ENCODE measurements at regions of chr11 and their contacts with region 1.

Region 1: DNA sequence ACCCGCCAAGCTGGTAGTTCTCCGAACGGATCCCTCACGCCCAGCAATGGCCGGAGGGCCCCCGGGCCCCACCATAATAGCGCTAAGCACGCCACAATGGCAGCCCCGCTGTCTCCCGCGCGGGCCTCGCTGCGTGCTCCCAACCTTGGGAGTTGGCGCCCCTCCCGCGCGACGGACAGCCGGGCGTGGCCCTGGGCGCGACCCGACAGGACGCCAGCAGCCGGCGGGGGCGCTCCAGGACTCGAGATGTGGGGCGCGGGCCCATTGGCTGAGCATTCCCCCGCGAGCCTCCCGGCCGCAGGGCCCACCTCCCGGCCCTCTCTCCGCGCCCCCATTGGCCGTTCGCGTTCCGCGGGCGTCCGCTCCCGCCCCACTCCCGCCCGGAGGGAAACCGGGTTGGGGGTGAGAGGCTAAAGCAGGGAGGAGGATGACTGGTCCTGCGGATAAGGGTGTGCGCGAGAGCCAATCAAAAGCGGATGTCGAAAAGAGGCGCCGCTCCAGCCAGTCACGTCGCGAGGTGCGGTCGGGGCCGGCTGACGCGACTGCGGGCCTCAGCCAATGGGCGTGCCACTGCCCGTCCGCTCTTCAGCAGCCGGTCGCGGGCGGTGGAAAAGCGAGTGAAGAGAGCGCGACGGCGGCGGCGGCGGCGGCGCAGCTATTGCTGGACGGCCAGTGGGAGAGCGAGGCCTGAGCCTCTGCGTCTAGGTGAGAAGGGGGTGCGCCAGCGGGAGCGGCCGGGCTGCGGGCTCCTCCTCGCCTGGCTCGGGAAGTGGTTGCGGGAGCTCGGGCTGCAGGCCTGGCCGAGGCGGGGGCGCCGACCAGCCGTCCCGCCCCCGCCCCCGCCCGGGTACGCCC is at the start of gene FAR1:
- DNase-seq: peak; percentile 98
- ATAC-seq: peak; percentile 87
- H3K4me3 ChIP-seq: peak within 1 kb of the TSS; percentile 69 to 92 (median 80)
- H3K4me3 Mint-ChIP-seq: peak within 1 kb of the TSS; percentile 96
- H3K27ac ChIP-seq: peak within 1 kb of the TSS; percentile 50 to 74
- H3K27ac Mint-ChIP-seq: peak within 1 kb of the TSS; percentile 94
- H3K4me1 ChIP-seq: peaks cover 16 to 24% of the 10 kb centered on the region in 2 donors
- H3K4me1 Mint-ChIP-seq: peaks cover 43% of the 10 kb centered on the region
- H3K27me3 ChIP-seq: peaks cover 0 to 4% (median 1%) of the 10 kb centered on the region in 4 experiments
- H3K27me3 Mint-ChIP-seq: peaks cover 8% of the 10 kb centered on the region
- CTCF ChIP-seq: peak; percentile 78
- total RNA-seq, gene FAR1: 44.7 and 44.8 TPM in 2 replicates

Region 2: DNA sequence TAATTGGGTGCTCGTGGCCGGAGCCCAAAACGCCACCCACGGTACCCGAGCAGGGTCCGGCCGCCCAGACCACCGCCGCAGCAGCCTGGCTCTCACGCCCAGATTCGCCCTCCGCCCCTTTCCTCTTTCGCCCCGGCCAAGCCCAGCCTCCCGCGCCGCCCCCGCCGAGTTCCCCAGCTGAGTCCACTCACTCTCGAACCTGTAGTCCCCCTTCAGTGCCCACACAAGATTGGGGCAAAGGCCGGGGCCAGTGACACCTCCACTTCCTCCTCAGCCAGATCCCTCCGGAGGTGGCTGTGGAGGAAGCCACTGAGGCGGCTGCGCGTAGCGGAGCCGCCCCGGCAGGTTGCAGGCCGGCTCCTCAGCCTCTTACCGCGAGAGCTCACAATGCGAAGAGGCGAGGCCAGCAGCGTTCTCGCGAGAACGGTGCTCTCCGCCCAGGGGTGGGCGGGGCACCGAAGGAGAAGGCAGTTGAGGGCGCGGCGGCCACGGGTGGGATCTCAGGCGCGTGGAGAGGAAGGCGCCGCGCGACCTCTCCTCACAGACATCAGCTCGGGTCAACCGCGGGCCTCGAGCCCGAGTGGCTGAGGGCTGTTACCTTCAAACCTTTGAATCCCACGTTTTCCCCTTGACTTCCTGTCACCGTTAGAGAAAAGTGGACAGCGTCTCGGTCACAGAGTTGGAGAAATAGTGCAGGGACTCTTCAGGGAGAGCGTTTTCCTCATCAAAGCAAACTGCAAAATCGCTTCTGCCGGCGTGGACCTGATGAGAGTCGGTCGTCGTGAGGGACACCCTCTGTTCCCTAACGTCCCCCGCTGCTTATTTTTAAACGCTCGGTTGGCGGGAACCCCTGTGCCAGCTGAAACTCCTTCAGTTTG is 205.2 kb before region 1 on chr11 and contains the start of gene BTBD10:
- CTCF ChIA-PET with region 1: interaction called, 11 read pairs
- POLR2A ChIA-PET with region 1: interaction called, 5 read pairs
- intact Hi-C with region 1: loop called (anchors 1 kb)
- DNase-seq: peak; percentile 97
- ATAC-seq: peak; percentile 98
- H3K4me3 ChIP-seq: peak within 1 kb of the TSS; percentile 87 to 94 (median 88)
- H3K4me3 Mint-ChIP-seq: peak within 1 kb of the TSS; percentile 99
- H3K27ac ChIP-seq: peak within 1 kb of the TSS; percentile 83 to 93
- H3K27ac Mint-ChIP-seq: peak within 1 kb of the TSS; percentile 97
- H3K4me1 ChIP-seq: peaks cover 17 to 18% of the 10 kb centered on the region in 2 donors
- H3K4me1 Mint-ChIP-seq: peaks cover 46% of the 10 kb centered on the region
- H3K27me3 ChIP-seq: no peaks in the 10 kb centered on the region
- H3K27me3 Mint-ChIP-seq: no peaks in the 10 kb centered on the region
- CTCF ChIP-seq: no peak
- total RNA-seq, gene BTBD10: 19.6 and 22.8 TPM in 2 replicates

Region 3: GRCh38 chr11:13638422-13638821 is 29.9 kb before region 1 on chr11:
- CTCF ChIA-PET with region 1: no interaction called
- POLR2A ChIA-PET with region 1: no interaction called
- intact Hi-C with region 1: no loop called
- DNase-seq: no peak
- ATAC-seq: no peak
- H3K4me3 ChIP-seq: no peak overlapping the region
- H3K4me3 Mint-ChIP-seq: no peak overlapping the region
- H3K27ac ChIP-seq: no peak overlapping the region
- H3K27ac Mint-ChIP-seq: no peak overlapping the region
- H3K4me1 ChIP-seq: no peaks in the 10 kb centered on the region
- H3K4me1 Mint-ChIP-seq: no peaks in the 10 kb centered on the region
- H3K27me3 ChIP-seq: peaks cover 0 to 8% (median 2%) of the 10 kb centered on the region in 4 experiments
- H3K27me3 Mint-ChIP-seq: peaks cover 21% of the 10 kb centered on the region
- CTCF ChIP-seq: no peak

Region 4: GRCh38 chr11:14237444-14237961 is 569.2 kb after region 1 on chr11:
- CTCF ChIA-PET with region 1: no interaction called
- POLR2A ChIA-PET with region 1: no interaction called
- intact Hi-C with region 1: loop called (anchors 1 kb)
- DNase-seq: peak; percentile 92
- ATAC-seq: peak; percentile 97
- H3K4me3 ChIP-seq: peak overlapping the region in 1 of 5 experiments; percentile 22
- H3K4me3 Mint-ChIP-seq: peak overlapping the region; percentile 70
- H3K27ac ChIP-seq: peak overlapping the region; percentile 62 to 73
- H3K27ac Mint-ChIP-seq: peak overlapping the region; percentile 84
- H3K4me1 ChIP-seq: peaks cover 32 to 34% of the 10 kb centered on the region in 2 donors
- H3K4me1 Mint-ChIP-seq: peaks cover 38% of the 10 kb centered on the region
- H3K27me3 ChIP-seq: no peaks in the 10 kb centered on the region
- H3K27me3 Mint-ChIP-seq: peaks cover 7% of the 10 kb centered on the region
- CTCF ChIP-seq: no peak

Measured in B cell (primary cell).